Sigmoid colon (tissue), 7 donors: ENCODE measurements at regions of chr18 and their contacts with region 1.

Region 1: GRCh38 chr18:48538531-48539405 is at the start of gene CTIF:
- DNase-seq: peak; percentile 99
- H3K4me3 ChIP-seq: peak within 1 kb of the TSS; percentile 63 to 88 (median 69)
- H3K27ac ChIP-seq: peak within 1 kb of the TSS; percentile 92 to 98 (median 96)
- H3K4me1 ChIP-seq: peaks cover 0 to 31% (median 30%) of the 10 kb centered on the region in 4 donors
- H3K27me3 ChIP-seq: no peaks in the 10 kb centered on the region
- CTCF ChIP-seq: no peak
- EP300 ChIP-seq: no peak
- POLR2A ChIP-seq: peak; percentile 40 to 65
- total RNA-seq, gene CTIF: 22.5 to 65.9 (median 40.4) TPM

Region 2: GRCh38 chr18:48007955-48008701 is 530.6 kb before region 1 on chr18:
- intact Hi-C with region 1: no loop called
- DNase-seq: peak; percentile 73
- H3K4me3 ChIP-seq: peak overlapping the region; percentile 38 to 63 (median 48)
- H3K27ac ChIP-seq: peak overlapping the region in 1 of 4 donors; percentile 49
- H3K4me1 ChIP-seq: peaks cover 0 to 15% (median 6%) of the 10 kb centered on the region in 4 donors
- H3K27me3 ChIP-seq: no peaks in the 10 kb centered on the region
- CTCF ChIP-seq: peak in 2 of 4 experiments; percentile 10 to 71
- EP300 ChIP-seq: no peak
- POLR2A ChIP-seq: no peak

Region 3: DNA sequence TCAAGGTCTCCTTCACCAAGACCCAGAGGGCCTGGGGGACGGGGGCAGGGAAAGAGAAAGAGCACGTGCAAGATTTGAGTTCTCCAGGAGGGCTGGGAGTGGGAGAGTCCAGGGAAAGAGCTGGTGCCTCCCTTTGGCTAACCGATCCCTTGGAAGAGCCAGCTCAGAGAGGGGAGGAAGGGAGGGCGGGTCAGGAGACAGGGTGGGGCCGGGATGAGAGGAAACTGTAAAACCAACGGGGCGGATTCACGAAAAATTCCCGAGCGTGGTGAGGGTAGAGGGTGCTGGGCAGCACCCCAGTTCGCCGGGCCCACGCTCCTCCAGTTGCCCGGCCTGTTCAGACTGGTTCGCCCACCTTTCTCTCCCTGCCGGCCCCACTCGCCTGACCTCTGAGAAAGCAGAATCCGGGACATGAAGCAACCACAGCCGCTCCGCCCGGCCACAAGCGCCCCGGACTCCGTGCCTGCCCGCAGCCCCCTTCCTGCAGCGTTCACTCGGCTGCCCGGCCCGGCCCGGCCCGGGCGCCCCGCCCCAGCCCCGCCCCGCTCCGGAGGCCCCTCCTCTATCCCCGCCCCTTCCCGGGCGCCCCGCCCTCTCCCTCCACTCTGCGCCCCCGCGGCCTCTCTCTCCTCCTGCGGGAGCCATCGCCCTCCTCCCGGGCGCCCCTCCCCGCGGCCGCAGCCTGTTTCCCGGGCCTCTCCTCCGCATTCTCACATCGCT is 377.4 kb before region 1 on chr18:
- intact Hi-C with region 1: loop called (anchors 5 kb)
- DNase-seq: peak; percentile 91
- H3K4me3 ChIP-seq: peak overlapping the region; percentile 36 to 87 (median 70)
- H3K27ac ChIP-seq: peak overlapping the region; percentile 77 to 89 (median 84)
- H3K4me1 ChIP-seq: peaks cover 0 to 19% (median 9%) of the 10 kb centered on the region in 4 donors
- H3K27me3 ChIP-seq: no peaks in the 10 kb centered on the region
- CTCF ChIP-seq: no peak
- EP300 ChIP-seq: no peak
- POLR2A ChIP-seq: peak in 1 of 2 donors; percentile 13

Region 4: GRCh38 chr18:48613589-48614404 is 75.0 kb after region 1 on chr18:
- intact Hi-C with region 1: loop called (anchors 5 kb)
- DNase-seq: peak; percentile 93
- H3K4me3 ChIP-seq: no peak overlapping the region
- H3K27ac ChIP-seq: peak overlapping the region; percentile 36 to 69 (median 66)
- H3K4me1 ChIP-seq: peaks cover 0 to 55% (median 34%) of the 10 kb centered on the region in 4 donors
- H3K27me3 ChIP-seq: no peaks in the 10 kb centered on the region
- CTCF ChIP-seq: no peak
- EP300 ChIP-seq: no peak
- POLR2A ChIP-seq: no peak

Region 5: GRCh38 chr18:48951448-48952286 is 412.9 kb after region 1 on chr18:
- intact Hi-C with region 1: loop called (anchors 10 kb)
- DNase-seq: peak; percentile 95
- H3K4me3 ChIP-seq: peak overlapping the region; percentile 76 to 96 (median 93)
- H3K27ac ChIP-seq: peak overlapping the region; percentile 93 to 99 (median 97)
- H3K4me1 ChIP-seq: peaks cover 0 to 50% (median 40%) of the 10 kb centered on the region in 4 donors
- H3K27me3 ChIP-seq: no peaks in the 10 kb centered on the region
- CTCF ChIP-seq: peak in 1 of 4 experiments; percentile 45
- EP300 ChIP-seq: peak in 1 of 4 donors; percentile 24
- POLR2A ChIP-seq: peak in 1 of 2 donors; percentile 15

Region 6: GRCh38 chr18:49813319-49814146 is 1274.8 kb after region 1 on chr18 and contains the start of gene ACAA2:
- intact Hi-C with region 1: loop called (anchors 5 kb)
- DNase-seq: peak; percentile 95
- H3K4me3 ChIP-seq: peak within 1 kb of the TSS; percentile 71 to 89 (median 82)
- H3K27ac ChIP-seq: peak within 1 kb of the TSS; percentile 91 to 96 (median 94)
- H3K4me1 ChIP-seq: peaks cover 0 to 28% (median 23%) of the 10 kb centered on the region in 4 donors
- H3K27me3 ChIP-seq: no peaks in the 10 kb centered on the region
- CTCF ChIP-seq: no peak
- EP300 ChIP-seq: no peak
- POLR2A ChIP-seq: peak; percentile 55 to 72
- total RNA-seq, gene ACAA2: 61.8 to 87.7 (median 63.2) TPM